Heart right ventricle (tissue), 16 donors: ENCODE measurements at regions of chr15 and their contacts with region 1.

Region 1: GRCh38 chr15:75468913-75469598 is 17.6 kb upstream of the SIN3A start:
- DNase-seq: peak in 1 of 2 donors; percentile 31
- ATAC-seq: peak in 2 of 8 donors; percentile 25 to 30
- H3K4me3 ChIP-seq: no peak overlapping the region
- H3K27ac ChIP-seq: peak overlapping the region in 1 of 10 donors; percentile 14
- H3K4me1 ChIP-seq: peaks cover 0 to 12% (median 8%) of the 10 kb centered on the region in 9 donors
- H3K27me3 ChIP-seq: no peaks in the 10 kb centered on the region
- CTCF ChIP-seq: no peak

Region 2: GRCh38 chr15:75335705-75336355 is 133.2 kb before region 1 on chr15 and contains the start of gene COMMD4:
- intact Hi-C with region 1: no loop called
- DNase-seq: peak; percentile 95 to 97
- ATAC-seq: peak; percentile 87 to 98 (median 95)
- H3K4me3 ChIP-seq: peak within 1 kb of the TSS; percentile 67 to 83 (median 78)
- H3K27ac ChIP-seq: peak within 1 kb of the TSS in 9 of 10 donors; percentile 37 to 88 (median 64)
- H3K4me1 ChIP-seq: peaks cover 4 to 24% (median 13%) of the 10 kb centered on the region in 9 donors
- H3K27me3 ChIP-seq: no peaks in the 10 kb centered on the region
- CTCF ChIP-seq: no peak
- total RNA-seq, gene COMMD4: 29.0 to 45.6 (median 38.0) TPM

Region 3: GRCh38 chr15:75542386-75542797 is 73.3 kb after region 1 on chr15:
- intact Hi-C with region 1: no loop called
- DNase-seq: no peak
- ATAC-seq: peak in 6 of 8 donors; percentile 35 to 82 (median 54)
- H3K4me3 ChIP-seq: no peak overlapping the region
- H3K27ac ChIP-seq: peak overlapping the region in 8 of 10 donors; percentile 16 to 79 (median 45)
- H3K4me1 ChIP-seq: peaks cover 5 to 53% (median 28%) of the 10 kb centered on the region in 9 donors
- H3K27me3 ChIP-seq: no peaks in the 10 kb centered on the region
- CTCF ChIP-seq: no peak

Region 4: GRCh38 chr15:75606711-75607699 is 137.9 kb after region 1 on chr15:
- intact Hi-C with region 1: loop called in 1 of 10 experiments (anchors 10 kb)
- DNase-seq: no peak
- ATAC-seq: no peak
- H3K4me3 ChIP-seq: no peak overlapping the region
- H3K27ac ChIP-seq: peak overlapping the region in 1 of 10 donors; percentile 42
- H3K4me1 ChIP-seq: peaks cover 0 to 16% (median 0%) of the 10 kb centered on the region in 9 donors
- H3K27me3 ChIP-seq: no peaks in the 10 kb centered on the region
- CTCF ChIP-seq: no peak